ENCODE measurements at regions of chr15 and their contacts with region 1.

Region 1: DNA sequence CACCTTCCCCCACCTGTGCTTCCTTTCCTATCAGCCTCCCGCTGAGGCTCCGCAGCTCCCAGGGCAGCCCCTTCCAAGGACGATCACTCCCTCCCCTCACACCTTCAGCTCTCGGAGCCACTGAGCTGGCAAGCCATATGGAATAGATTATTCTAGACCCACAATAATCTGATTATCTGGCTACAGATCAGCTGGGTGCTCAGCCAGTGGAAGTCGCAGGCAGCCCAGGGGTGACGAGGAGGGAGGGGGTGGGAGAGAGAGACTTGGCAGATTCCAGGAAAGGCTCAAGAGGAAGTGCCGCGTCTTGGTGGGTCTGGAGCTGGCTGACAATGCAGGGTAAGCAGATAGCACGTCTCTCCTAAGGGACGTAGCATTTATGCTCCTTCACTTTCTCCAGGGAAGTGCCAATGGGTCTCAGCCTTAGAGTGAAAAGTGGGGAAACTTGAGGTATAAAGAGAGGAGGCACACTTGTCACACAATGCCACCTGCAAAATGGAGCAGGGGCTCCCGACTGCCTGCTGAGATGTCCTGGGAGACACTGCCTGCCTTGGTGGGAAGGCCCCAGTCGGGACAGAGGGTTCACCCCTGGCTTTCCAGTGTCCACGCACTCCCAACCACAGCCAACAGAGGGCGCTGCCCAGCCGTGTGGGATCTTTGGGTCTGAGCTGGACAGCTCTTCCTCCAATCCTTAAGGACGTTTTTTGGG is 9.4 kb upstream of the MESP1 start:
- DNase-seq: peak; percentile 72 to 91
- ATAC-seq: peak; percentile 93 to 97
- H3K4me3 ChIP-seq: no peak overlapping the region
- H3K27ac ChIP-seq: no peak overlapping the region
- H3K4me1 ChIP-seq: peaks cover 4% of the 10 kb centered on the region; the same call in 2 of the 3 replicates
- CTCF ChIP-seq: peak; percentile 98
- EP300 ChIP-seq: no peak
- POLR2A ChIP-seq: no peak
- RAD21 ChIP-seq: peak; percentile 97 to 98

Region 2: GRCh38 chr15:89728254-89728653 is 32.2 kb before region 1 on chr15:
- CTCF ChIA-PET with region 1: interaction called, 34 read pairs
- POLR2A ChIA-PET with region 1: no interaction called
- DNase-seq: no peak
- ATAC-seq: no peak
- H3K4me3 ChIP-seq: no peak overlapping the region
- H3K27ac ChIP-seq: no peak overlapping the region
- H3K4me1 ChIP-seq: no peaks in the 10 kb centered on the region
- CTCF ChIP-seq: no peak
- EP300 ChIP-seq: no peak
- POLR2A ChIP-seq: no peak
- RAD21 ChIP-seq: no peak

Region 3: DNA sequence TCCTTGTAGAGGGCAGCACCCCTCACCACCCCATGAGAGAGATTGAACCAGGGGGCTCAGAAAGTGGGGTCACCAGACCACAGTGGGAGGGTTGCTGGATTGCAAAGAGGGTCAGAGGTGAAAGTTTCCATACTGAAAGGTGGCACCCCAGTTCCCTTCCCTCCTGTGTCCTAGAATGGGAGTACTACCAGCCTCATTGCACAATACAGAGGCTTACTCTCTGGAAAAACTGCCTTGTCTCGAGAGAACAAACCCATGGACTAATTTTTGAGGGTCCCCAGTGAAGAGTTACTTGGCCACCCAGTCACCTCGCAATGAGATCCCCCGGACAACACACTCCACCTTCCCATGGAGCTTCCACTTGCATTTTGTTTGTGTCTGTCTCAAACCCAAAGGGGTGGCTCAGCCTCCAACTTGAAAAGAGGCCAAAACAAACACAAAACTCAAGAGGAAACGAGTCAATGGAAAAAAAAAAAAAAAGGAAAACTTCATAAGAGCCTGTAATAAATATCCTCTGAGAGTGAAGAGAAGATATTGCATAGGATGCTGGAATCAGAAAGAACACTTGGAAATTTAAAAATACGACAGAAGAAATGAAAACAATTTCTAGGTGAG is 34.3 kb after region 1 on chr15:
- CTCF ChIA-PET with region 1: interaction called, 39 read pairs
- POLR2A ChIA-PET with region 1: no interaction called
- DNase-seq: no peak
- ATAC-seq: no peak
- H3K4me3 ChIP-seq: no peak overlapping the region
- H3K27ac ChIP-seq: peak overlapping the region; percentile 21 to 70; a peak in 3 of 6 replicates
- H3K4me1 ChIP-seq: peaks cover 18% of the 10 kb centered on the region
- CTCF ChIP-seq: no peak
- EP300 ChIP-seq: no peak
- POLR2A ChIP-seq: no peak
- RAD21 ChIP-seq: no peak

Region 4: DNA sequence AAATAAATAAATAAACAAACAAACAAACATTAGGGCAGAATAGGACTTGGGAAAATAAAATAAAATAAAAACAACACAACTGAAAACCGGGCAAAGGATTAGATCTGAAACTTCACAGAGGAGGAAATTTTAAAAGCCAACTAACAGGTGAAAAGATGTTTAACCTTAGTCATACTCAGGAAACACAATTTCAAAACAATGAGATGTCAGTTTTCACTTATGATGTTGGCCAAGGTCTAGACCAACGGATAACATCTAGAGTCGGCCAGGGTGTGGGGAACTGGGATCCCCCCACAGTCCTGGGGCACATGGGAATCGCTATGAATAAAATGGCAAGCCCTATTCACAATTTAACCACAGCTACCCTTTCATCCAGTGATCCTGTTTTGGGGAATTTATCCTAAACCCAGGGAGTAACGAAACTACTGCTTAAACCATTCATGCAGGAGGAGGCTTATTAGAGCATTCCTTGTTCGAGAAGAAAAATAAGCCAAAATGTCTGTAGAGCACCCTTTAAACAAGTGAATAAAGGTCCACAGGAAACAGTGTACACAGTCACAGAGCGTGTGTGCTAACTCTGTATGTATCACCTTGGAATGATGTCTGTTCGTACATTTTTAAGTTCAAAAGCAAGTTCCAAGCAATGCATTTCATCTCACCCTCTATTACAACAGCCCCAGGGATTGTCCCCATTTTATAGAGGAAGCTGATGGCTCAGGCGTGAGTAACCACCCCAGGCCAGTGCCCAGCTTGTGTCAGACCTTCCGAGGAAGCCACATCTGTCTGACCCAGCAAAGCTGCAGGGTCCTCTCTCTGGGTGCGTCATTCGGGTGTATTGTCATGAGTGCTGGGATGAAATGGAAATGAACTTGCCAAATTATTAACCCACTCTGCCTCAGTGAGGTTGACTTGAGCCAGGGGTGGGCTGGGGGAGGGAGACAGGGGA is 60.5 kb after region 1 on chr15:
- CTCF ChIA-PET with region 1: interaction called, 38 read pairs
- POLR2A ChIA-PET with region 1: no interaction called
- DNase-seq: peak; percentile 73 to 81
- ATAC-seq: peak; percentile 72 to 81
- H3K4me3 ChIP-seq: no peak overlapping the region
- H3K27ac ChIP-seq: peak overlapping the region; percentile 45 to 81
- H3K4me1 ChIP-seq: peaks cover 44% of the 10 kb centered on the region
- CTCF ChIP-seq: no peak
- EP300 ChIP-seq: peak; percentile 27 to 55; a peak in 1 of 5 replicates
- POLR2A ChIP-seq: no peak
- RAD21 ChIP-seq: no peak

Region 5: DNA sequence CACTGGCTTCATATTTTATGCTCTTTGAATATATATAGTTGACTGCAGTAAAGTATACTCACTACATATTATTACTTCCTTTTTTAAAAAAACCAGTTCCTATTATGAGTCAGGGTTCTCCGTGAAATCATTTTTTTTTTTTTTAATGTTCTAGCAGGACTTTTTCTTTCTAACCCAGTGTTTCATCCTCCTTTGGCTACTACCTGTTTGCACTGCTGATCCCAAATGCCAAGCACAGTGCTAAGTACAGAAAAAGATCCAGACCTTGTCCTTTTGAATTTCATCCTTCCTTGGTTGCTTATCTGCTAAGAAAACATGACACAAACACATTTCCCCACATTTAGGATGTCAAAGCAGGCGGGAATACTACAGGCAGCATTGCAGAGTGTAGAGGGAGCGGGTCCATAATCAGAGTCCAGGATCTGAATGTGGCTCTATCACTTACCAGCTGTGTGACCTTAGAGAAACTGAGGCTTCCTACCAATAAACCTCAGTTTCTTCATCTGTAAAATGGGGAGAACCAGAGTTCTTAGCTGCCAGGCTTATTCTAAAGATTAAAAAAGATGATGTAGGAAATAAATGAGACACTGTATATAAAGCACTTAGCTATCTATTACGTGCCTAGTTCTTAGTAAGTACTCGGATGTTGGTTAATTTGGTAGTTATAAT is 91.4 kb after region 1 on chr15:
- CTCF ChIA-PET with region 1: interaction called, 38 read pairs
- POLR2A ChIA-PET with region 1: no interaction called
- DNase-seq: no peak
- ATAC-seq: no peak
- H3K4me3 ChIP-seq: no peak overlapping the region
- H3K27ac ChIP-seq: peak overlapping the region in 1 of 2 experiments; percentile 3; a peak in 1 of 6 replicates
- H3K4me1 ChIP-seq: peaks cover 48% of the 10 kb centered on the region
- CTCF ChIP-seq: no peak
- EP300 ChIP-seq: no peak
- POLR2A ChIP-seq: no peak
- RAD21 ChIP-seq: no peak

Region 6: DNA sequence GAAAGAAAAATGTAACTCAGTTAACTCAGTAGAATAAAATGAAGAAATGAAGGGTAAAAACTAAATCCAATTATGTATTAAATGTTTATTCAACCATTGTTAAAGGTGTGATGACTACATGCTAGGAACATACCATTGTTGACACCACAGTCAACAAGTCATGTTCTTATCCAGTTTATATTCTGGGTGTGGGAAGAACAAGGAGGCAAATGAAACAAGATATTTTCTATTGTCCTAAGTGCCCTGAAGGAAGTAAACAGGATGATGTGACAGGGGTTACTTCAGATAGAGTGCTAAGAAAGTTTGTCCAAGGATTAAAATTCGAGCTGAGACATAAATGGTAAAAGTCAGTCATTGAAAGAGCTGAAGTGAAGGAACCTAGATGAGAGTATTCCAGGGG is 120.3 kb after region 1 on chr15:
- CTCF ChIA-PET with region 1: interaction called, 491 read pairs
- POLR2A ChIA-PET with region 1: no interaction called
- DNase-seq: no peak
- ATAC-seq: no peak
- H3K4me3 ChIP-seq: no peak overlapping the region
- H3K27ac ChIP-seq: no peak overlapping the region
- H3K4me1 ChIP-seq: no peaks in the 10 kb centered on the region
- CTCF ChIP-seq: no peak
- EP300 ChIP-seq: no peak
- POLR2A ChIP-seq: no peak
- RAD21 ChIP-seq: no peak

Region 7: DNA sequence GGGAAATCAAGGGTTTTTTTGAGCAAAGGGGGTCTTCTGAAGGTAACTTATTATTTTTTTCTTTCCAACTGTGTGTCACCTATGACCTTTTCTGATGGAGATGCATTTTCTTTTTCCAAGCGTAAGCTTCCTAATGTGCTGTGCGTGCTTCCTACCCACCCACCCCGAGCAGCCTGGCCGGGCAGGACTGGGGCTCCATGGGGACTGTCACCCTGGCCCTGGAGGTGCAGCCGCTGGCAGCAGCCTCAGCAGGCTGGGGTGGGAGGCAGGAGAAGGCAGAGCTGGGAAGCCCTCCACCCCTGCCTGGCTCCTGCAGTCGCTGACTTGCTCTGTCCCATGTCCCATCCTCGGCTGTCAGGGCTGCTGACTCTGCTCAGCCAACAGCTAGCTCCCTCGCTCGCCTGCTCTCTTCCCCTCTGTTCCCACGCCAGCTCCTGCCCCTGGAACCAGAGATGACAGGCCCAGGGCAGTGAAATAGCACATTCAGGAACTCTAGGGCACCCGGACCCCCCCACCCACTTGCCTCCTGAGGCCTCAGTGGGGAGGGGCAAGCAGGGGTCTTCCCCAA is 320.4 kb after region 1 on chr15:
- CTCF ChIA-PET with region 1: interaction called, 13 read pairs
- POLR2A ChIA-PET with region 1: no interaction called
- DNase-seq: no peak
- ATAC-seq: no peak; a peak in 1 of 6 replicates
- H3K4me3 ChIP-seq: no peak overlapping the region
- H3K27ac ChIP-seq: no peak overlapping the region
- H3K4me1 ChIP-seq: no peaks in the 10 kb centered on the region
- CTCF ChIP-seq: no peak
- EP300 ChIP-seq: no peak
- POLR2A ChIP-seq: no peak
- RAD21 ChIP-seq: no peak

Region 8: DNA sequence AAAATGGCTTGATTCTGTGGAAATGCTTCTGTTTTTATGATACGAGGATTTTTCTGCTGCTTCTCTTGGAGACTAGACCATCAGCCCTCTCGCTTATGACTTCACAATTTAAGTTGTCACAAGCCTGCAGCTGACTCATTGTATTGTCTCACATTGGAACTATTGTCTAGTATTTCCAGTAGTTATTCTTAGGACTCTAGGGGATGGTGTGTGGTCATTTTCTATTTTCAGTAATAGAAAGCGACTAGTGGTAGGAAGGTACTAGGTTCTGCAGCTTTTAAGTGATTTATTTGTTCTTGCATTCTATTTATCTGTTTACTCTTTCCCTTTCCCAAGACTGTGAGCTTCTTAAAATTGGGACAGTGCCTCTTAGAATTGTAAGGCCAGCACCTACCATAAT is 702.9 kb after region 1 on chr15:
- CTCF ChIA-PET with region 1: no interaction called
- POLR2A ChIA-PET with region 1: no interaction called
- DNase-seq: peak in 1 of 2 experiments; percentile 14
- ATAC-seq: peak; percentile 17 to 30; a peak in 2 of 6 replicates
- H3K4me3 ChIP-seq: no peak overlapping the region
- H3K27ac ChIP-seq: no peak overlapping the region
- H3K4me1 ChIP-seq: no peaks in the 10 kb centered on the region
- CTCF ChIP-seq: no peak
- EP300 ChIP-seq: no peak
- POLR2A ChIP-seq: no peak
- RAD21 ChIP-seq: no peak

Measured in A549 (cell line).